CD8-positive, alpha-beta T cell (primary cell): ENCODE measurements at regions of chr19 and their contacts with region 1.

Region 1: GRCh38 chr19:47210689-47211316 is 20.2 kb downstream of the BBC3 start:
- DNase-seq: peak; percentile 58 to 87 (median 83)
- ATAC-seq: peak; percentile 98
- H3K4me3 ChIP-seq: no peak overlapping the region
- H3K4me3 Mint-ChIP-seq: no peak overlapping the region
- H3K27ac ChIP-seq: peak overlapping the region in 1 of 2 experiments; percentile 39
- H3K27ac Mint-ChIP-seq: peak overlapping the region; percentile 80
- H3K4me1 ChIP-seq: peaks cover 8% of the 10 kb centered on the region
- H3K4me1 Mint-ChIP-seq: peaks cover 8% of the 10 kb centered on the region
- H3K27me3 ChIP-seq: no peaks in the 10 kb centered on the region
- H3K27me3 Mint-ChIP-seq: no peaks in the 10 kb centered on the region
- CTCF ChIP-seq: peak; percentile 89

Region 2: DNA sequence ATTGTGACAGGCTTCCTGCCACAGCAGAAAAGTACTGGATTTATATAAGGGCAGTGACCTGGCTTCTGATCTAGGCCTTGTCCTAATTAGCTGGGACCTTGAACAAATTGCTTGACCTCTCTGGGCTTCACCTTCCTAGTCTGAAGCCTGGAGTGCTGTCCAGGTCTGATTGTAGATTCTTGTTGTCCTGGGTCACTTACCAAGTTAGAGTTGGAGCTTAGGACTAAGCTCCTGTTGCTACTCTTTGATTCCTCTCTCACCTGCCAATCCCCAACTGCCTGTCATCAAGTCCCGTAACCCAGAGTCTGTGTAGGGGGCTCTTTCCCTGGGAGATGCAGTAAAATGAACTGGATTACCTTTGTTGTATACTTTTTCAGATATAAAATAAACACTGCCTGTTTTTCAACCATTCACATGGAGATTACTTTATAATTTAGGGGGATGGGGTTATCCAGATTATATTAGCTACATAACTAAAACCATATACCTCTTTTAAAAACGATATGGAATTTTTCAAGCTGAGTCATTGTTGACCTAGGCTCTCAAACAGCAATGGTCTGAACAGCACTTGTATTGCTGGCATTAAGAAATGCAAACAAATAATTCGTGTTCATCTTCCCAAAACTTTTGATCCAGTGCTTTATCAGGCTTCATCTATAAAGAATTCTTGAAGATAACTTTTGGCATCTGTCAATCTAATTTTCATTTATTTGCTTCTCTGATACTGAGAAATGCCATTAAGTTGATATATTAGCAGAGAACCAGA is 344.2 kb before region 1 on chr19:
- CTCF ChIA-PET with region 1: no interaction called
- POLR2A ChIA-PET with region 1: no interaction called
- intact Hi-C with region 1: no loop called
- DNase-seq: peak in 1 of 9 experiments; percentile 32
- ATAC-seq: no peak
- H3K4me3 ChIP-seq: no peak overlapping the region
- H3K4me3 Mint-ChIP-seq: no peak overlapping the region
- H3K27ac ChIP-seq: peak overlapping the region in 1 of 2 experiments; percentile 25
- H3K27ac Mint-ChIP-seq: peak overlapping the region; percentile 63
- H3K4me1 ChIP-seq: peaks cover 38% of the 10 kb centered on the region
- H3K4me1 Mint-ChIP-seq: peaks cover 33% of the 10 kb centered on the region
- H3K27me3 ChIP-seq: no peaks in the 10 kb centered on the region
- H3K27me3 Mint-ChIP-seq: no peaks in the 10 kb centered on the region
- CTCF ChIP-seq: no peak

Region 3: DNA sequence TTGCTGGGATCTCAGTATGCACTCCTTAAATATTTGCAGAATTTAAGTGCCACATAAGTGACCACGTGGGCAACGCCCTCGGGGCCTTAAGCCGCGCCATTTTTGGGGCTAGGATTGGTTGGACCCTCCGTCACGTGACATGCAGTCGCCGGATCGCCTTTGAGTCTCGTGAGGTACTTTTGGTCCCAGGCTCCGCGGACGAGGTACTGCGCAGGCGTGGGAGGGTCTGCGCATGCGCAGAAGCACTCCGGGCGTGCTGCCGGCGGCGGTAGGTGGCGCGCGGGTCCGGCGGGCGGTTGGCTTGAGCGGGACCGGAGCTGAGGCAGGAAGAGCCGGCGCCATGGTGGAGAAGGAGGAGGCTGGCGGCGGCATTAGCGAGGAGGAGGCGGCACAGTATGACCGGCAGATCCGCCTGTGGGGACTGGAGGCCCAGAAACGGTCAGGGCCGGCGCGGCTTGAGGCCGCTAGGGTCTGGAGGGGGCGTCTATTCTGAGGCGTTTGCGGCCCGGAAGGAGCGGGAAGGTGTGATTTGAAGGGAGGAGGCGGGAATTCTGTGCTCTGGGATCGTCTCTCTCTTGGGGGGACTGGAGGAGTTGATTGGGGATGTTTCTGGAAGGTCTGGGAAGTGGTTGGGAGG is 80.1 kb before region 1 on chr19 and contains the start of gene SAE1:
- CTCF ChIA-PET with region 1: interaction called, 16 read pairs
- POLR2A ChIA-PET with region 1: no interaction called
- intact Hi-C with region 1: no loop called
- DNase-seq: peak; percentile 85 to 95 (median 88)
- ATAC-seq: peak; percentile 88
- H3K4me3 ChIP-seq: peak within 1 kb of the TSS; percentile 91 to 99
- H3K4me3 Mint-ChIP-seq: peak within 1 kb of the TSS; percentile 99
- H3K27ac ChIP-seq: peak within 1 kb of the TSS; percentile 59 to 86
- H3K27ac Mint-ChIP-seq: peak within 1 kb of the TSS; percentile 91
- H3K4me1 ChIP-seq: peaks cover 37% of the 10 kb centered on the region
- H3K4me1 Mint-ChIP-seq: peaks cover 47% of the 10 kb centered on the region
- H3K27me3 ChIP-seq: no peaks in the 10 kb centered on the region
- H3K27me3 Mint-ChIP-seq: no peaks in the 10 kb centered on the region
- CTCF ChIP-seq: peak; percentile 67
- total RNA-seq, gene SAE1: 22.4 TPM

Region 4: GRCh38 chr19:47152224-47153017 is 58.4 kb before region 1 on chr19:
- CTCF ChIA-PET with region 1: interaction called, 93 read pairs
- POLR2A ChIA-PET with region 1: interaction called, 16 read pairs
- intact Hi-C with region 1: loop called (anchors 1 kb)
- DNase-seq: no peak
- ATAC-seq: no peak
- H3K4me3 ChIP-seq: no peak overlapping the region
- H3K4me3 Mint-ChIP-seq: no peak overlapping the region
- H3K27ac ChIP-seq: no peak overlapping the region
- H3K27ac Mint-ChIP-seq: no peak overlapping the region
- H3K4me1 ChIP-seq: peaks cover 44% of the 10 kb centered on the region
- H3K4me1 Mint-ChIP-seq: peaks cover 59% of the 10 kb centered on the region
- H3K27me3 ChIP-seq: no peaks in the 10 kb centered on the region
- H3K27me3 Mint-ChIP-seq: no peaks in the 10 kb centered on the region
- CTCF ChIP-seq: no peak

Region 5: GRCh38 chr19:47176627-47177090 is 34.1 kb before region 1 on chr19:
- CTCF ChIA-PET with region 1: interaction called, 12 read pairs
- POLR2A ChIA-PET with region 1: interaction called, 5 read pairs
- intact Hi-C with region 1: no loop called
- DNase-seq: peak in 8 of 9 experiments; percentile 12 to 77 (median 48)
- ATAC-seq: peak; percentile 85
- H3K4me3 ChIP-seq: peak overlapping the region in 1 of 2 experiments; percentile 2
- H3K4me3 Mint-ChIP-seq: peak overlapping the region; percentile 64
- H3K27ac ChIP-seq: peak overlapping the region; percentile 18 to 50
- H3K27ac Mint-ChIP-seq: peak overlapping the region; percentile 95
- H3K4me1 ChIP-seq: peaks cover 59% of the 10 kb centered on the region
- H3K4me1 Mint-ChIP-seq: peaks cover 69% of the 10 kb centered on the region
- H3K27me3 ChIP-seq: no peaks in the 10 kb centered on the region
- H3K27me3 Mint-ChIP-seq: no peaks in the 10 kb centered on the region
- CTCF ChIP-seq: no peak

Region 6: DNA sequence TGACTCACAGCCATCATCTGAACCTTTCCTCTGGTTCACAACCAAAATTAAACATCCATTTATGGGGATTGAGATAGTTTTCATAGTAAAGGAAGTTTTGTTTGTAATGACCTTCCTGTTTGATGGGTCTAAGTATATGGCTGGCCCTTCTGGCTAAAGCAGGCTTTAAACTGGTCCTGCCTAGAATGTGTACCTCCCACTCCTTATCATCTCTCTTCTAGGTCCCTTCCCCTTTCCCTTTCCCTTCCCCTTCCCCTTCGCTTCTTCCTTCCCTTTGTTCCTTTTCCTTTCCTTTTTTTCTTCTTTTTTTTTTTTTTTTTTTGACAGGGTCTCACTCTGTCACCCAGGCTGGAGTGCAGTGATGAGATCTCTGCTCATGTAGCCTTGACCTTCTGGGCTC is 15.4 kb before region 1 on chr19:
- CTCF ChIA-PET with region 1: interaction called, 42 read pairs
- POLR2A ChIA-PET with region 1: interaction called, 6 read pairs
- intact Hi-C with region 1: no loop called
- DNase-seq: no peak
- ATAC-seq: no peak
- H3K4me3 ChIP-seq: no peak overlapping the region
- H3K4me3 Mint-ChIP-seq: no peak overlapping the region
- H3K27ac ChIP-seq: no peak overlapping the region
- H3K27ac Mint-ChIP-seq: no peak overlapping the region
- H3K4me1 ChIP-seq: peaks cover 22% of the 10 kb centered on the region
- H3K4me1 Mint-ChIP-seq: peaks cover 24% of the 10 kb centered on the region
- H3K27me3 ChIP-seq: no peaks in the 10 kb centered on the region
- H3K27me3 Mint-ChIP-seq: no peaks in the 10 kb centered on the region
- CTCF ChIP-seq: no peak

Region 7: GRCh38 chr19:47231215-47231984 is 20.6 kb after region 1 on chr19:
- CTCF ChIA-PET with region 1: interaction called, 83 read pairs
- POLR2A ChIA-PET with region 1: interaction called, 19 read pairs
- intact Hi-C with region 1: loop called (anchors 1 kb)
- DNase-seq: peak; percentile 80 to 95 (median 93)
- ATAC-seq: peak; percentile 54
- H3K4me3 ChIP-seq: peak overlapping the region; percentile 59 to 66
- H3K4me3 Mint-ChIP-seq: peak overlapping the region; percentile 79
- H3K27ac ChIP-seq: peak overlapping the region; percentile 45 to 83
- H3K27ac Mint-ChIP-seq: peak overlapping the region; percentile 88
- H3K4me1 ChIP-seq: peaks cover 42% of the 10 kb centered on the region
- H3K4me1 Mint-ChIP-seq: peaks cover 28% of the 10 kb centered on the region
- H3K27me3 ChIP-seq: no peaks in the 10 kb centered on the region
- H3K27me3 Mint-ChIP-seq: no peaks in the 10 kb centered on the region
- CTCF ChIP-seq: no peak

Region 8: DNA sequence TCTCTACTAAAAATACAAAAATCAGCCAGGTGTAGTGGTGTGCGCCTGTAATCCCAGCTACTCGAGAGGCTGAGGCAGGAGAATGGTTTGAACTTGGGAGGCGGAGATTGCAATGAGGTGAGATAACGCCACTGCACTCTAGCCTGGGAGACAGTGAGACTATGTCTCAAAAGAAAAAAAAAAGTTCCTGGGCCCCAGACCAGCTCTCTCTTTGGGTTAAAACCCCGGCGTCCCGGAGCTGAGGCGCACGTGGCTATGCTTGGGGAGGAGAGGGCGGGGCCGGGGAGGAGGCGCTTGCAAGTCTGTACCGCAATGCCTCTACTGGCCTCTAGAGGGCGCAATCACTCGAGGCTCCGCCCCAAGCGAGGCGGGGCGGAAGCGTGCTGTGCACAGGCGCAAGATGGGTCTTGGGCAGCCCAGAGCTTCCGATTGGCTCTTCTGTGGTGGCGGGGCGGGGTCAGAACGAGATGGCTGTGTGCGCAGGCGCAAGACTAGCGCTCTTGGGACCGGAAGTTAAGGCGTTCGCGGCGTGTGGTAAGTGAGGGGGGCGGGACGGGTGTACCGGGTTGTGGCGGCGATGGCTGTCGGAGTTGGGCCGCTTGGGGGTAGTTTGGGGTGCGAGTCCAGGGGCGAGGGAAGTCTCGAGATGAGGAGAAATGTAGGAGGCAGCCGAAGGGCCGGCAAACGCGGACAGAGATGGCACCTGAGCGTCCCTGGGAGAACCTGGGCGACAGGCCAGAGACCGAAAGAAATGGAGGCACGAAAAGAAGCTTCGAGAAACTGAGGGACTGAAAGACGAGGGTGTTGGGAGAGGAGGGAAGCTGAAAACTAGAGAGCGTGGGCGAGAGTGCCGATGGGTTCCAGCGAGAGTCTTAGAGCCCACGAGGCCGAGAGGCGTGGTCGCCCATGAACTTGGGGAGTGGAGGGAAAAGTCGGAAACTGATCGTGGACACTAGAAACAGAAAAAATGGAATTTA is 138.3 kb after region 1 on chr19 and contains the start of gene DHX34:
- CTCF ChIA-PET with region 1: no interaction called
- POLR2A ChIA-PET with region 1: no interaction called
- intact Hi-C with region 1: no loop called
- DNase-seq: peak; percentile 98 to 100 (median 99)
- ATAC-seq: peak; percentile 98
- H3K4me3 ChIP-seq: peak within 1 kb of the TSS; percentile 88 to 93
- H3K4me3 Mint-ChIP-seq: peak within 1 kb of the TSS; percentile 98
- H3K27ac ChIP-seq: peak within 1 kb of the TSS; percentile 71 to 72
- H3K27ac Mint-ChIP-seq: peak within 1 kb of the TSS; percentile 91
- H3K4me1 ChIP-seq: peaks cover 25% of the 10 kb centered on the region
- H3K4me1 Mint-ChIP-seq: peaks cover 38% of the 10 kb centered on the region
- H3K27me3 ChIP-seq: no peaks in the 10 kb centered on the region
- H3K27me3 Mint-ChIP-seq: peaks cover 3% of the 10 kb centered on the region
- CTCF ChIP-seq: peak; percentile 72
- total RNA-seq, gene DHX34: 7.7 to 8.1 TPM